Heart right ventricle (tissue), 16 donors: ENCODE measurements at regions of chr10 and their contacts with region 1.

Region 1: GRCh38 chr10:100229819-100230422 is 525 bp upstream of the CHUK start:
- DNase-seq: no peak
- ATAC-seq: peak in 3 of 8 donors; percentile 2 to 4 (median 4)
- H3K4me3 ChIP-seq: peak overlapping the region; percentile 78 to 99 (median 94)
- H3K27ac ChIP-seq: peak overlapping the region in 9 of 10 donors; percentile 73 to 90 (median 81)
- H3K4me1 ChIP-seq: peaks cover 0 to 22% (median 15%) of the 10 kb centered on the region in 9 donors
- H3K27me3 ChIP-seq: no peaks in the 10 kb centered on the region
- CTCF ChIP-seq: no peak

Region 2: GRCh38 chr10:98646998-98647917 is 1582.7 kb before region 1 on chr10:
- intact Hi-C with region 1: no loop called
- DNase-seq: no peak
- ATAC-seq: no peak
- H3K4me3 ChIP-seq: no peak overlapping the region
- H3K27ac ChIP-seq: no peak overlapping the region
- H3K4me1 ChIP-seq: no peaks in the 10 kb centered on the region
- H3K27me3 ChIP-seq: peaks cover 0 to 12% (median 0%) of the 10 kb centered on the region in 7 donors
- CTCF ChIP-seq: no peak

Region 3: GRCh38 chr10:100185364-100186252 is 44.3 kb before region 1 on chr10 and contains the start of gene ERLIN1:
- intact Hi-C with region 1: loop called in 2 of 10 experiments (anchors 5 kb)
- DNase-seq: peak; percentile 92 to 93
- ATAC-seq: peak; percentile 98 to 99 (median 98)
- H3K4me3 ChIP-seq: peak within 1 kb of the TSS; percentile 46 to 97 (median 86)
- H3K27ac ChIP-seq: peak within 1 kb of the TSS; percentile 59 to 93 (median 86)
- H3K4me1 ChIP-seq: peaks cover 6 to 59% (median 29%) of the 10 kb centered on the region in 9 donors
- H3K27me3 ChIP-seq: no peaks in the 10 kb centered on the region
- CTCF ChIP-seq: no peak
- total RNA-seq, gene ERLIN1: 4.4 to 13.3 (median 7.5) TPM

Region 4: DNA sequence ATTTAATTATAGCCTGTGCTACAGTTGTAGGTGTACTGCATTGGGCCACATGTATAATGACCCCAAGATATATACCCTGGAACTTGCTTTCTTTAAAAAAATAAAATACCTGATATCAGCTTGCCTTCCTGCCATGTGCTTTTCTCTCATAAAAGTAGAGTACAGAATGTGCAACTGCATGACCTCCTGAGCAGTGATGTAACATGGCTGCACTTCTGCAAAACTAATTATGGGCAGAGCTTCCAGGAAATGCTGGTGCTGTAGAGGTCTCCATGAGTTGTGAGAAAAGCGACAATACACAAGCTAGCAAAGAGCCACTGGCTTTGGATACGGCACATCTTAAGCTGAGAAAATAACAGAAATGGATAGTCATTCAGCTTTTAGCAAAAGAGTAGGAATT is 37.6 kb before region 1 on chr10:
- intact Hi-C with region 1: loop called in 2 of 10 experiments (anchors 5 kb)
- DNase-seq: peak in 1 of 2 donors; percentile 49
- ATAC-seq: peak; percentile 70 to 97 (median 92)
- H3K4me3 ChIP-seq: no peak overlapping the region
- H3K27ac ChIP-seq: peak overlapping the region in 8 of 10 donors; percentile 14 to 76 (median 59)
- H3K4me1 ChIP-seq: peaks cover 0 to 30% (median 16%) of the 10 kb centered on the region in 9 donors
- H3K27me3 ChIP-seq: no peaks in the 10 kb centered on the region
- CTCF ChIP-seq: no peak